Dendritic cell treated with granulocyte-macrophage colony-stimulating factor and Interleukin-4, amounts not matched to agents 40 ng/mL and 50 ng/mL, for 4 days (primary cell): ENCODE measurements at regions of chr18 and their contacts with region 1.

Region 1: GRCh38 chr18:76476665-76477561 is 18.1 kb downstream of the ZNF516 start:
- H3K4me3 Mint-ChIP-seq: peak overlapping the region; percentile 32
- H3K27ac Mint-ChIP-seq: peak overlapping the region; percentile 78
- H3K4me1 Mint-ChIP-seq: peaks cover 91% of the 10 kb centered on the region
- H3K27me3 Mint-ChIP-seq: no peaks in the 10 kb centered on the region

Region 2: GRCh38 chr18:76620321-76621170 is 143.6 kb after region 1 on chr18:
- intact Hi-C with region 1: loop called (anchors 10 kb)
- H3K4me3 Mint-ChIP-seq: peak overlapping the region; percentile 78
- H3K27ac Mint-ChIP-seq: peak overlapping the region; percentile 73
- H3K4me1 Mint-ChIP-seq: peaks cover 33% of the 10 kb centered on the region
- H3K27me3 Mint-ChIP-seq: peaks cover 2% of the 10 kb centered on the region

Region 3: DNA sequence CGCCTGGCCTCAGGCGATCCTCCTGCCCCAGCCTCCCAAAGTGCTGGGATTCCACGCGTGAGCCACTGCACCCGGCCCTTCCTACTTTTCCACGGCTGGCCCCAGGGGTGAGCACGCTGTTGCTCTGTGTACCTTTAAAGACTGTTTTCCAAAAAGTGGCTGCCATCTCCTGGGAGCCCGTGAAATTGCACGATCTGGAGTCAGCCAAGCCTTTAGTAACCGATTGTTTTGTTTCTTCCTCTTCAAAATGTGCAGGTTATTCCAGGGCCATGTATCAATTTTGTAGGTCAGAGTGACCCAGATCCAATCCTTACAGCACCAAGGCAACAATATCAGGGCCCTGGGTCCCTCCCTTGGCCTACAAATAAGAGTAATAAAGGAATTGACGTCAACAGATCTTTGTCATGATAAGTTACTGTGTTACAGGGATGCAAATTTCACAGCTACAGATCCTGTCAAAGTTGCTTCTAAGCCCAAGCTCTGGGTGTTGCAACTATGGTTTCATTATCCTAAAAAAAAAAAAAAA is 209.9 kb after region 1 on chr18:
- intact Hi-C with region 1: loop called (anchors 10 kb)
- H3K4me3 Mint-ChIP-seq: no peak overlapping the region
- H3K27ac Mint-ChIP-seq: peak overlapping the region; percentile 11
- H3K4me1 Mint-ChIP-seq: peaks cover 27% of the 10 kb centered on the region
- H3K27me3 Mint-ChIP-seq: peaks cover 25% of the 10 kb centered on the region